ENCODE measurements at regions of chr1 and their contacts with region 1.

Region 1: GRCh38 chr1:84433258-84434080 is 35.2 kb downstream of the DNASE2B start:
- DNase-seq: peak; percentile 75
- ATAC-seq: peak; percentile 81
- H3K4me3 Mint-ChIP-seq: peak overlapping the region; percentile 58
- H3K27ac Mint-ChIP-seq: peak overlapping the region; percentile 44
- H3K4me1 Mint-ChIP-seq: peaks cover 12% of the 10 kb centered on the region
- H3K27me3 Mint-ChIP-seq: no peaks in the 10 kb centered on the region

Region 2: DNA sequence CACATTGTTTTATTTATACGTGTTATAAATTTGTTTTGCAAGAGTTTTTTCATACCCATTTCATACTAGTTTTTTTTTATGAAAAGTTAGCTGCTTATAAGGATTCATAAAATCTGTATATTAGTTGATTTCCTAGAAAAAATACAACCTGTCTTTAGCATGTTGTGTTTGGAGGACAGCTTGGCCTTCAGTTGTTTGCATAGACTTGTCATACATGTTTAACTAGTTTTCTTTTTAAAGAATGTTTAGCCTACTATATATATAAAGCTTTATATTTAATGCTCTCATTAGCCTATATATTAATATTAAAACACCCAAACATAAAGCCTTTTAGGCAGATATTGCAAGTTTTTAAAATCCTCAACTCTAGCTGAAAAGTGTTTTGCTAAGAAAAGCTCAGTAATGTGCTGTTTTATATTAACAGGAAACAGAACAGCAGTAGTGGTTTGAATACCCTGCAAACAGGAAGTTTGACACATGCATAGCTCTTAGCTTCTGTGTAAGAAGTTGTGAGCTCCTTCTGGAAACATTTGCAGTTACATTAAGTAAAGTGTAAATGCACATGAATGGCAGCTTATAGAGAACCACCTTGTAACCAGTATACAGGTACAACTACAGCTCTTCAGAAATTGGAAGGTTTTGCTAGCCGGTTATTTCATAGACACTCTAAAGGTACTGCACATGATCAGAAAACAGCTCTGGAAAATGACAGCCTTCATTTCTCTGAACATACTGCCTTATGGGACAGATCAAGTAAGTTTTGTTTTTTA is 289.5 kb before region 1 on chr1 and contains the start of gene PRKACB:
- CTCF ChIA-PET with region 1: interaction called, 50 read pairs
- DNase-seq: no peak
- ATAC-seq: peak; percentile 90
- H3K4me3 Mint-ChIP-seq: peak within 1 kb of the TSS; percentile 90
- H3K27ac Mint-ChIP-seq: peak within 1 kb of the TSS; percentile 99
- H3K4me1 Mint-ChIP-seq: peaks cover 31% of the 10 kb centered on the region
- H3K27me3 Mint-ChIP-seq: no peaks in the 10 kb centered on the region
- total RNA-seq, gene PRKACB: 68.8 to 69.1 TPM

Region 3: GRCh38 chr1:84467298-84467697 is 33.8 kb after region 1 on chr1:
- CTCF ChIA-PET with region 1: no interaction called
- DNase-seq: no peak
- ATAC-seq: no peak
- H3K4me3 Mint-ChIP-seq: no peak overlapping the region
- H3K27ac Mint-ChIP-seq: no peak overlapping the region
- H3K4me1 Mint-ChIP-seq: no peaks in the 10 kb centered on the region
- H3K27me3 Mint-ChIP-seq: peaks cover 32% of the 10 kb centered on the region

Region 4: DNA sequence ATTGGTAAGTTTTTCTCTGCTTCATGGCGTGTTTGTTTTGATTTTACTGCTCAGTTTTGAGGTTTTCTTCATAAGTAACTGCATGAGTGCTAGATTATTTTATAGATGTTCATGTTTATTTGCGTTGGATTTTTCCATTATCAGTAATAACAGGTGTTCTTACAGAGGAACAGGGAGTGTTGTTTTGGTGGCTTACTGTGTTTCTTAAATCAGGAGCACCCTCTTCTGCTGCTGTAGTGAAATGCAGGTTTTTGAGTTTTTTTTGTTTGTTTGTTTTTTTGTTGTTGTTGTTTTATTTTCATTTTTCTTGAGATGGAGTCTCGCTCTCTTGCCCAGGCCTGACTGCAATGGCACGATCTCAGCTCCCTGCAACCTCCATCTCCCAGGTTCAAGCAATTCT is 108.2 kb after region 1 on chr1:
- CTCF ChIA-PET with region 1: no interaction called
- DNase-seq: no peak
- ATAC-seq: no peak
- H3K4me3 Mint-ChIP-seq: no peak overlapping the region
- H3K27ac Mint-ChIP-seq: no peak overlapping the region
- H3K4me1 Mint-ChIP-seq: peaks cover 22% of the 10 kb centered on the region
- H3K27me3 Mint-ChIP-seq: no peaks in the 10 kb centered on the region

Region 5: GRCh38 chr1:84620720-84621313 is 187.3 kb after region 1 on chr1:
- CTCF ChIA-PET with region 1: interaction called, 20 read pairs
- DNase-seq: peak; percentile 85
- ATAC-seq: peak; percentile 95
- H3K4me3 Mint-ChIP-seq: peak overlapping the region; percentile 86
- H3K27ac Mint-ChIP-seq: peak overlapping the region; percentile 89
- H3K4me1 Mint-ChIP-seq: peaks cover 22% of the 10 kb centered on the region
- H3K27me3 Mint-ChIP-seq: no peaks in the 10 kb centered on the region

Region 6: GRCh38 chr1:84753516-84754385 is 320.3 kb after region 1 on chr1:
- CTCF ChIA-PET with region 1: interaction called, 13 read pairs
- DNase-seq: peak; percentile 75
- ATAC-seq: peak; percentile 88
- H3K4me3 Mint-ChIP-seq: no peak overlapping the region
- H3K27ac Mint-ChIP-seq: no peak overlapping the region
- H3K4me1 Mint-ChIP-seq: peaks cover 15% of the 10 kb centered on the region
- H3K27me3 Mint-ChIP-seq: peaks cover 4% of the 10 kb centered on the region